ENCODE measurements at regions of chr6 and their contacts with region 1.

Region 1: DNA sequence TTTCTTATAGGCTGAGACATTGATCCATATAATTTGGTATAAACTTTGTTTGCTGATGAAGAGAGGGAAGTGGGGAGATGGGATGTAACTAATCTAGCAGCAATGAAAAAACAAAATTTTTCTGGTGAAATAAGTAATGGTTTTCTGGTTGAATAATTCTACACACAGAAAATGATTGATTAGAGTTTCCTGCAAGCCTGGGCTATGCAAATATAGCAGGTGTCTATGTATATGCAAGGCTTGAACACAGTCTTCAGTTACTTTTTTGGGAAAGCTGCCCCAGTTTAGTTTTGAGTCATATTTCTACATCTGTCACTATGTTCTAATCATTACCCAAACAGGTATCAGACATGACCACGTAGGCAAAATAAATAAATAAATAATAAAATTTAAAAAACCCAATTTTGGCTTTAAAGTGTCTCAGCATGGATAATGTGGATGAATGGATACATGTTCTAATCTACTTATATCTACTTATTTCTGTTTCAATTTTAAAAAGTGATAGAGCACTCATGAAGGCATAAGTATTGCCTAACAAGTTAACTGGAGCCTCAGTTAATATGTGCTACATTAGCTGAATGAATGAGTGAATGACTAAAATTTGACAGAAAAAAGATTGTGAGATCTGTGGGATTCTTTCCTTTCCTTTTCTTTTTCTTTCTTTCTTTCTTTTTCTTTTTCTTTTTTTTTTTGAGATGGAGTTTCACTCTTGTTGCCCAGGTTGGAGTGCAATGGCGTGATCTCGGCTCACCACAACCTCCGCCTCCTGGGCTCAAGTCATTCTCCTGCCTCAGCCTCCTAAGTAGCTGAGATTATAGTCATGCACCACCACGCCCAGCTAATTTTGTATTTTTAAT is 37.2 kb upstream of the TFB1M start:
- DNase-seq: no peak
- H3K4me3 ChIP-seq: no peak overlapping the region
- H3K27ac ChIP-seq: no peak overlapping the region
- H3K4me1 ChIP-seq: no peaks in the 10 kb centered on the region
- H3K27me3 ChIP-seq: no peaks in the 10 kb centered on the region
- CTCF ChIP-seq: no peak

Region 2: DNA sequence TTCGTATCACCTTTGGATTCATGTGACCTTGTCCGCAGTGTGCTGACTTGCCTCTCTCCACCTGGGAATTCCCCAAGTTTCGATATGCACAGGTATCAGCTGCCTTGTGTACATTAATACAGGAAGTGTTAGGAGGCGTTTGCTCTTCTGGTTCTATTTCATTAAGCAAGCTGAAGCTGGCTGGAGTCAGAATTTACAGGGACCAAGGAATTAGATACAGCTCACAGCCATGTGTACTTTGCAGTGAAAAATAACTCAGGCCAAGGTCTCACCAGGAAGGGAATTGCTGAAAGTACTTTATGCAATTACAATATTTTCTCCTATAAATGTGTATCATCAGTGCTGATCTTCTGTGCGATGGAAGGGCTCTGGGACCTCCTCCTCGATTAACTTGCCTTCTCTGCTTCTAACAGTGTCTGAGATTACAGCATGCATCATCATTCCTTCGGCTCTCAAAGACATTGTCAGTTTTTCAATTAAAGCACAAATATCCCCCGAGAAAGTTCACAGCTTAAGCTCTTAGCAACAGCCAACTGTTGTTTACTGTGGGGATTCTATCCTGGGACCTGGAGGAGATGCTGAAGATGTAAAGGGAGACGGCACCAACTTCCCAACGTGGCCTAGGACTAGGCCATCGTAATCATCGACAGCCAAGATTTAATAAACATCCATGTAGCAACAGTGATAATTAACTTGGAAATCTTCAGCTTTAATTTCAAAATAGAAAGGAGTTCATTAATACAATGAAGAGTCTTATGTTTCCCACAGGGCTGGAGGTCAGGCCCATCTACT is 370.2 kb before region 1 on chr6:
- CTCF ChIA-PET with region 1: no interaction called
- dilution Hi-C with region 1: no loop called
- in situ Hi-C with region 1: no loop called
- intact Hi-C with region 1: no loop called
- DNase-seq: peak; percentile 88
- H3K4me3 ChIP-seq: no peak overlapping the region
- H3K27ac ChIP-seq: no peak overlapping the region
- H3K4me1 ChIP-seq: no peaks in the 10 kb centered on the region
- H3K27me3 ChIP-seq: no peaks in the 10 kb centered on the region
- CTCF ChIP-seq: no peak

Region 3: DNA sequence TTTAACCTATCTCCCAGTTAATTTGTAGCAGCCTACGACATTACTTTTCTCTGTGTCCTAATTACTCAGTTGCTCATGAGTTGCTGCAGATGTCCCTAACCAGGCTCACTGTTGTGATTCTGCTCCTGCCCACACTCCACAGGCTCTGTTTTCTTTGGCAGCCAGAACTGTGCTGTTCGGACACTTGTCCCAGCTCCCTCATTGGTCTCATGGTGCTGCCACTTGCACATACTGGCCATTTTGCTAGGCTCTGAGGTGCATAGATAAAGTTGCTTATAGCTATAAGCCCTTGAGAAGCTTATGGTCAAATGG is 49.1 kb after region 1 on chr6:
- CTCF ChIA-PET with region 1: no interaction called
- dilution Hi-C with region 1: loop called (anchors 5 kb)
- in situ Hi-C with region 1: no loop called
- intact Hi-C with region 1: no loop called
- DNase-seq: no peak
- H3K4me3 ChIP-seq: no peak overlapping the region
- H3K27ac ChIP-seq: no peak overlapping the region
- H3K4me1 ChIP-seq: no peaks in the 10 kb centered on the region
- H3K27me3 ChIP-seq: peaks cover 6% of the 10 kb centered on the region
- CTCF ChIP-seq: no peak

Region 4: GRCh38 chr6:155538708-155539390 is 187.3 kb after region 1 on chr6:
- CTCF ChIA-PET with region 1: no interaction called
- dilution Hi-C with region 1: loop called (anchors 5 kb)
- in situ Hi-C with region 1: no loop called
- intact Hi-C with region 1: no loop called
- DNase-seq: no peak
- H3K4me3 ChIP-seq: no peak overlapping the region
- H3K27ac ChIP-seq: no peak overlapping the region
- H3K4me1 ChIP-seq: no peaks in the 10 kb centered on the region
- H3K27me3 ChIP-seq: peaks cover 2% of the 10 kb centered on the region
- CTCF ChIP-seq: no peak